ENCODE measurements at regions of chr17 and their contacts with region 1.

Region 1: DNA sequence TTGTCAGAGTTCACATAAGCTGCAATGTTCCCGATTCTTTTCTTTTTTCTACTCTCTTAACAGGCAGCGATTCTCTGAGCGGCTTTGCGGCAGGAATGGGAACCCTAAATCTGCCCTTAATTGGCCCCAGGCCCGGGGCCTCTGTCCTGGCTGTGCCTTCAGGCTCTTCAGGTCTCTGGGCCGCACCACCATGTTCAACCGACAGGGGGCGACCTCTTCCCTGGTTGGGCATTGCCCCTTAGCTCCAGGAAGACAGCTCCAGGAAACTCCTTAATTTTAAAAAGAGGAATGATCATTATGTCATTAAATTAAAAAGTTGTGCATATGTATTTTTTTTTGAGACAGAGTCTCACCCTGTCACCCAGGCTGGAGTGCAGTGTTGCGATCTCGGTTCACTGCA is 20.3 kb downstream of the CACNG5 start:
- DNase-seq: no peak
- ATAC-seq: no peak
- H3K4me3 ChIP-seq: no peak overlapping the region
- H3K27ac ChIP-seq: no peak overlapping the region
- H3K4me1 ChIP-seq: peaks cover 0 to 8% (median 0%) of the 10 kb centered on the region in 12 donors
- H3K27me3 ChIP-seq: no peaks in the 10 kb centered on the region
- CTCF ChIP-seq: peak in 4 of 12 donors; percentile 12 to 23 (median 20)
- POLR2A ChIP-seq: no peak

Region 2: GRCh38 chr17:66900126-66901010 is 45.2 kb after region 1 on chr17:
- intact Hi-C with region 1: no loop called
- DNase-seq: no peak
- ATAC-seq: no peak
- H3K4me3 ChIP-seq: no peak overlapping the region
- H3K27ac ChIP-seq: no peak overlapping the region
- H3K4me1 ChIP-seq: peaks cover 0 to 9% (median 6%) of the 10 kb centered on the region in 12 donors
- H3K27me3 ChIP-seq: peaks cover 0 to 15% (median 0%) of the 10 kb centered on the region in 9 donors
- CTCF ChIP-seq: peak in 7 of 12 donors; percentile 5 to 37 (median 24)
- POLR2A ChIP-seq: no peak

Region 3: GRCh38 chr17:66915204-66916096 is 60.2 kb after region 1 on chr17:
- intact Hi-C with region 1: loop called in 1 of 10 experiments (anchors 10 kb)
- DNase-seq: no peak
- ATAC-seq: peak in 3 of 4 donors; percentile 42 to 65 (median 56)
- H3K4me3 ChIP-seq: no peak overlapping the region
- H3K27ac ChIP-seq: no peak overlapping the region
- H3K4me1 ChIP-seq: no peaks in the 10 kb centered on the region
- H3K27me3 ChIP-seq: peaks cover 0 to 22% (median 0%) of the 10 kb centered on the region in 9 donors
- CTCF ChIP-seq: peak in 5 of 12 donors; percentile 6 to 27 (median 20)
- POLR2A ChIP-seq: no peak

Measured in heart left ventricle (tissue), 16 donors.